Esophagus squamous epithelium (tissue), 5 donors: ENCODE measurements at regions of chr20 and their contacts with region 1.

Region 1: GRCh38 chr20:9978397-9979004 is 56.3 kb upstream of the ANKEF1 start:
- DNase-seq: no peak
- H3K4me3 ChIP-seq: no peak overlapping the region
- H3K27ac ChIP-seq: no peak overlapping the region
- H3K4me1 ChIP-seq: peaks cover 0 to 3% (median 0%) of the 10 kb centered on the region in 3 donors
- H3K27me3 ChIP-seq: peaks cover 0 to 3% (median 0%) of the 10 kb centered on the region in 4 donors
- CTCF ChIP-seq: peak; percentile 42 to 84 (median 70)
- POLR2A ChIP-seq: no peak

Region 2: DNA sequence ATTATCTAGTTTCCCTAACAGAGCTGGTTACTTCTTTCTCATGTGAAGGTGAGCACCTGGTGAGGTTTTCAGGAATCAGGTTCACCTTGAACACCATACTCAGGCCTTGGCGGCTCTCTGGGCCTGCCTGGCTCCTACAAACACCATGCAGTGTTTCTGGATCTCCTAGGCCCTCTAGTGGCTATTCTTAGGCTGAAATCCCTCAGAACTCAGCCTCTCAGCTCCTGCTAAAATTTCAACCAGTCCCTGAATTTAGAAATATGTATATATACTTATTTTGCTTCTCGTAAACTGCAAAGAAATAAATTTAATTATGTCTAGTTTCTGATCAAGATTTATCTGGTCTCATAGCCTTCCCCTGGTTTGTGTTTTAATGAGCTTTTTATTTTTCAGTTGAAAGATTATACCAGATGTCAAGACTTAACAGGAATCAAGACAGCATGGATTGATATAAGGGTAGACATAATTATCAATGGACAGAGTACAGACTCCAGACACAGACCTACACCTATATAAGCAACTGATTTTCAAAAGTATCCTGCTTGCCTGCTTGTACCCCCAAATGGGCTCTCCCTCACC is 112.2 kb after region 1 on chr20:
- intact Hi-C with region 1: loop called (anchors 2 kb)
- DNase-seq: no peak
- H3K4me3 ChIP-seq: no peak overlapping the region
- H3K27ac ChIP-seq: no peak overlapping the region
- H3K4me1 ChIP-seq: peaks cover 0 to 5% (median 0%) of the 10 kb centered on the region in 3 donors
- H3K27me3 ChIP-seq: peaks cover 0 to 3% (median 0%) of the 10 kb centered on the region in 4 donors
- CTCF ChIP-seq: peak; percentile 39 to 82 (median 68)
- POLR2A ChIP-seq: no peak

Region 3: DNA sequence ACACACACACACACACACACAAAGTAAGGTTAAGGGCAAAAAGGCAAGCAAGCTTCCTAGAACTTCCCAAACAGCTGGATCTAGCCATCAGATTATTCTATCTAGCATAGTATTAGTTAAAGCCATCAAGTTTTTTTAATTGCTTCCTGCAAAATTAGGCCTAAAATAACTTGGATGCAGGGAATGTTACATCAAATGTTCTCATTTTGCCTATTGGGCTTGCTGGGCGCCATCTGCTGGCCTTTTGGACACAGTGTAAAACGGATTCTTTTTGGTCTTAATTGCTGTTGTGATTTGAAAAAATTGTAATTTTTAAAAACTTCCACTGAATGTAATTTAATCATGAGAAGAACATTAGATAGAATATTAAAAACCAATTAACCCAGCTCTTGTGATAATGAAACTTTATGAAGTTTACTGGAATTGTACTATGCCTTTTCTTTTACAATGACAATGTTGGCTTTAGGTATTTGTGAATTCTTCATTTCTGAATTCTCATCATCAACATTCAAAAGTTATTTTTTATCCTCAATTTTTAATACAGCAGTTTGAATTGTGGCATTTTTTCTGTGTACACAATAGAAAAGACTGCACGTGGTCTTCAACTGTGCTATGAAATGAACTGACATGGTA is 448.7 kb after region 1 on chr20:
- intact Hi-C with region 1: loop called (anchors 5 kb)
- DNase-seq: no peak
- H3K4me3 ChIP-seq: no peak overlapping the region
- H3K27ac ChIP-seq: no peak overlapping the region
- H3K4me1 ChIP-seq: peaks cover 0 to 55% (median 11%) of the 10 kb centered on the region in 3 donors
- H3K27me3 ChIP-seq: no peaks in the 10 kb centered on the region
- CTCF ChIP-seq: peak; percentile 25 to 78 (median 63)
- POLR2A ChIP-seq: no peak